Transverse colon (tissue), 4 donors: ENCODE measurements at regions of chr1 and their contacts with region 1.

Region 1: DNA sequence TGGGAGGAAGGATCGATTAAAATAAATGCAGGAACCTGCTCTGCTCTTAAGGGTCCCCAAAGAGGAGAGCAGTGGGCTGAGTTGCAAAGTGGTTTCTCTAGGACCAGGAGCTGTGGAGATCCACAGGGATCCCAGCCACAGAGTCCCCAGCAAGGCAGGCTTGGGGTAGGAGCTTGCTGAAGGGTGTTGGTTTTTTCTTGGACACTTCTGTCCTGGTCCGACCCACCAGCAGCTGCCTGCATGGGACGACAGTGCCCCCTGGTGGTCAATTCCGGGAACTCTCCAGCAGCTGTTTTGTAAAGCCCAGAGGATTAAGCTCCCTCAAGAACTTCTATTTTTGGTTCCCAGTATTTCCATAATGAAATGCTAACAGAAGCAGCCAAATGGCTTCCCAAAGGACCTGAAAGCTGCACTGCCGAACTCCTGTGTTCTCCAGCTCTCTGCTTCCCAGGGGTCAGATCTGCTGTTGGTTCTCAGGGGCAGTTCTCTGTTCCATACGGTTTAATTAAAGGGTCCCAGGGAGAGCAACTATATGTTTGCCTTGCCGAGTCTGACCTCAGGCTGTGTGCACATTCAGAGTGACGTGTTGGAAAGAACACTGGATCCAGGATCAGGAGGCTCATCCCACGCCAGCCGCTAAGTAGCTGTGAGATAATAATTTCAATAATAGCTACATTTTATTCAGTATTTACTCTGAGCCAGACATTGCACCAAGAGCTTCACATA is 23.2 kb downstream of the NENF start:
- DNase-seq: peak; percentile 89
- H3K4me3 ChIP-seq: no peak overlapping the region
- H3K27ac ChIP-seq: peak overlapping the region in 2 of 4 donors; percentile 26 to 36
- H3K4me1 ChIP-seq: peaks cover 0 to 14% (median 3%) of the 10 kb centered on the region in 4 donors
- H3K27me3 ChIP-seq: no peaks in the 10 kb centered on the region
- CTCF ChIP-seq: peak; percentile 92 to 99 (median 98)
- EP300 ChIP-seq: no peak
- POLR2A ChIP-seq: no peak

Region 2: GRCh38 chr1:212062832-212063438 is 393.0 kb before region 1 on chr1:
- in situ Hi-C with region 1: loop called in 2 of 4 experiments (anchors 10 kb)
- intact Hi-C with region 1: loop called (anchors 5 kb)
- DNase-seq: no peak
- H3K4me3 ChIP-seq: no peak overlapping the region
- H3K27ac ChIP-seq: no peak overlapping the region
- H3K4me1 ChIP-seq: no peaks in the 10 kb centered on the region
- H3K27me3 ChIP-seq: no peaks in the 10 kb centered on the region
- CTCF ChIP-seq: peak; percentile 56 to 68 (median 63)
- EP300 ChIP-seq: no peak
- POLR2A ChIP-seq: no peak

Region 3: GRCh38 chr1:212162635-212163034 is 293.3 kb before region 1 on chr1:
- in situ Hi-C with region 1: no loop called
- intact Hi-C with region 1: no loop called
- DNase-seq: no peak
- H3K4me3 ChIP-seq: no peak overlapping the region
- H3K27ac ChIP-seq: no peak overlapping the region
- H3K4me1 ChIP-seq: peaks cover 0 to 19% (median 2%) of the 10 kb centered on the region in 4 donors
- H3K27me3 ChIP-seq: no peaks in the 10 kb centered on the region
- CTCF ChIP-seq: no peak
- EP300 ChIP-seq: no peak
- POLR2A ChIP-seq: no peak

Region 4: GRCh38 chr1:212291505-212292134 is 164.3 kb before region 1 on chr1:
- in situ Hi-C with region 1: loop called in 1 of 4 experiments (anchors 10 kb)
- intact Hi-C with region 1: no loop called
- DNase-seq: no peak
- H3K4me3 ChIP-seq: no peak overlapping the region
- H3K27ac ChIP-seq: no peak overlapping the region
- H3K4me1 ChIP-seq: peaks cover 30 to 76% (median 62%) of the 10 kb centered on the region in 4 donors
- H3K27me3 ChIP-seq: no peaks in the 10 kb centered on the region
- CTCF ChIP-seq: peak; percentile 36 to 53 (median 48)
- EP300 ChIP-seq: no peak
- POLR2A ChIP-seq: no peak

Region 5: DNA sequence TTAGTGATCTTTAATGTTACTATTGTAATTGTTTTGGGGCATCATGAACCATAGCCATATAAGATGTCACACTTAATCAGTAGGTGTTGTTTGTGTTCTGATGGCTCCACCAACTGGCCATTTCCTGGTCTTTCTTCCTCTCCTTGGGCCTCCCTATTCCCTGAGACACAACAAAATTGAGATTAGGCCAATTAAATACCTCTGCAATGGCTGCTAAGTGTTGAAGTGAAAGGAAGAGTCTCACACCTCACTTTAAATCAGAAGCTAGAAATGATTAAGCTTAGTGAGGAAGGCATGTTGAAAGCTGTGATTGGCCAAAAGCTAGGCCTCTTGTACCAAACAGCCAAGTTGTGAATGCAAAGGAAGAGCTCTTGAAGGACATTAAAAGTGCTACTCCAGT is 140.1 kb before region 1 on chr1:
- in situ Hi-C with region 1: no loop called
- intact Hi-C with region 1: no loop called
- DNase-seq: peak; percentile 24
- H3K4me3 ChIP-seq: no peak overlapping the region
- H3K27ac ChIP-seq: no peak overlapping the region
- H3K4me1 ChIP-seq: peaks cover 0 to 31% (median 4%) of the 10 kb centered on the region in 4 donors
- H3K27me3 ChIP-seq: no peaks in the 10 kb centered on the region
- CTCF ChIP-seq: peak in 3 of 5 experiments; percentile 17 to 26 (median 17)
- EP300 ChIP-seq: no peak
- POLR2A ChIP-seq: no peak

Region 6: DNA sequence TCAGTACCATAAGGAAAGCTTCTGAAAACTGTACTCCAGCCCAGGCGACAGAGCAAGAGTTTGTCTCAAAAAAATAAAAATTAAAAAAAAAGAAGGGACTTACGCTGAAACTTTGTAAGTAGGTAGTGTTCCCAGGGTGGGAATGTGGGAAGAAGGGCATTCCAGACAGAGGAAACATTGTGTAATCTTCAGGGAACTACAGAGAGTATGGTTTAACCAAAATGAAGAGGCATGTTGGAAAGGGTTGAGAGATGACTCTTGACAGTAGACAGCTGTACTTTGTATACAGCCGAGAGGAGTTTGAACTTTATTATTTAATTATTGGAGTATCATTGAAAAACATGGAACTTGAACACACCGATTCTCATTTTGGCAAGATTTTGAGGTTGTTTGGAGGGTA is 127.7 kb before region 1 on chr1:
- in situ Hi-C with region 1: no loop called
- intact Hi-C with region 1: no loop called
- DNase-seq: no peak
- H3K4me3 ChIP-seq: no peak overlapping the region
- H3K27ac ChIP-seq: no peak overlapping the region
- H3K4me1 ChIP-seq: no peaks in the 10 kb centered on the region
- H3K27me3 ChIP-seq: no peaks in the 10 kb centered on the region
- CTCF ChIP-seq: no peak
- EP300 ChIP-seq: no peak
- POLR2A ChIP-seq: no peak

Region 7: DNA sequence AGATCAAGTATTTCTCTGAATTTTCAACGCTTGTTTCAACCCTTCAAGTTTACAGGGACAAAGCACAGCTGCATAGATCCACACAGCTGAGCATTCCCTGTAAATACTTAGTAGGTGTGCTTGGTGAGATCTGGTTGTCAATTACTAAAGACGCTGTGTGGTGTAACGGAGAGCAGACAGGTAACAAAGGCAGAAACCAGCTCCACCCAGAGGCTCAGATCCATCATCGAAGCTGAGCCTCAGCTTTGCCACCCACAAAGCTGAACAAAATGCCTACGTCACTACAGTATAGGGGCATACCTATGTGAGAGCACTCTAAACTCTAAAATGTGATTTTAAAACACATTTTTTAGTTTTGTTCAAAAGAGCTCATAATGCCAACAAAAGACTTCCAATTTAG is 80.0 kb before region 1 on chr1:
- in situ Hi-C with region 1: loop called in 2 of 4 experiments (anchors 10 kb)
- intact Hi-C with region 1: no loop called
- DNase-seq: no peak
- H3K4me3 ChIP-seq: no peak overlapping the region
- H3K27ac ChIP-seq: no peak overlapping the region
- H3K4me1 ChIP-seq: no peaks in the 10 kb centered on the region
- H3K27me3 ChIP-seq: no peaks in the 10 kb centered on the region
- CTCF ChIP-seq: no peak
- EP300 ChIP-seq: no peak
- POLR2A ChIP-seq: no peak